HepG2 (cell line): ENCODE measurements at regions of chr7 and their contacts with region 1.

Region 1: GRCh38 chr7:65444899-65445823 is 71.5 kb downstream of the ZNF92 start:
- DNase-seq: peak; percentile 98
- ATAC-seq: peak; percentile 99
- H3K4me3 ChIP-seq: peak overlapping the region in 1 of 3 experiments; percentile 15; a peak in 1 of 6 replicates
- H3K27ac ChIP-seq: peak overlapping the region; percentile 97
- H3K4me1 ChIP-seq: peaks cover 83% of the 10 kb centered on the region
- H3K27me3 ChIP-seq: no peaks in the 10 kb centered on the region
- CTCF ChIP-seq: no peak
- EP300 ChIP-seq: peak; percentile 92 to 99
- POLR2A ChIP-seq: no peak
- RAD21 ChIP-seq: no peak

Region 2: GRCh38 chr7:65373608-65374351 is 71.4 kb before region 1 on chr7 and contains the start of gene ZNF92:
- CTCF ChIA-PET with region 1: no interaction called
- POLR2A ChIA-PET with region 1: interaction called, 4 read pairs
- in situ Hi-C with region 1: no loop called
- intact Hi-C with region 1: loop called (anchors 1 kb)
- DNase-seq: peak; percentile 97
- ATAC-seq: peak; percentile 98
- H3K4me3 ChIP-seq: peak within 1 kb of the TSS; percentile 80 to 97 (median 91)
- H3K27ac ChIP-seq: peak within 1 kb of the TSS; percentile 75
- H3K4me1 ChIP-seq: peaks cover 65% of the 10 kb centered on the region
- H3K27me3 ChIP-seq: no peaks in the 10 kb centered on the region
- CTCF ChIP-seq: 0 out of 2 replicates have a peak, but pooled peaks have one; percentile 3
- EP300 ChIP-seq: no peak
- POLR2A ChIP-seq: peak; percentile 94 to 97
- RAD21 ChIP-seq: peak; percentile 38
- total RNA-seq, gene ZNF92: 13.2 and 19.0 TPM in 2 replicates

Region 3: GRCh38 chr7:65397730-65398142 is 47.4 kb before region 1 on chr7:
- CTCF ChIA-PET with region 1: no interaction called
- POLR2A ChIA-PET with region 1: no interaction called
- in situ Hi-C with region 1: no loop called
- intact Hi-C with region 1: loop called (anchors 2 kb)
- DNase-seq: peak; percentile 86
- ATAC-seq: peak; percentile 100
- H3K4me3 ChIP-seq: no peak overlapping the region; a peak in 1 of 6 replicates
- H3K27ac ChIP-seq: peak overlapping the region; percentile 50
- H3K4me1 ChIP-seq: peaks cover 40% of the 10 kb centered on the region
- H3K27me3 ChIP-seq: no peaks in the 10 kb centered on the region
- CTCF ChIP-seq: peak; percentile 36; the same call in 1 of the 2 replicates
- EP300 ChIP-seq: peak in 1 of 2 experiments; percentile 71; a peak in 2 of 4 replicates
- POLR2A ChIP-seq: no peak
- RAD21 ChIP-seq: peak; percentile 48; the same call in 1 of the 2 replicates

Region 4: DNA sequence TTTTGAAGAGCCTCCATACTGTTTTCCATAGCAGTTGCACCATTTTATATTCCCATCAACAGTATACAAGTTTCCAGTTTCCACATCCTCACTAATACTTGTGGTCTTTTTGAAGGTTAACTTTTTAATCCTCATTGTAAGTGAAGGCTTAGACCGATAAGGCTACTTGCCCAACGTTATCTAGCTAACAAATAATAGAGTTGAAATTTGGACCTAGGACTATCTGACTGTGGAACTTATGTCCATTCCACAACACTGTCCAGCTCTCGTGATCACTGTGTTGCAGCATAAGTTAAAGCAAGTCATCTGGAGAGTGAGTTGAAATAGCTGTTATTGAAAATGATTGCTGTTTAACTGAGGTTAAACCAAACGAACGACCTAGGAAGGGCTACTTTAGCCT is 12.5 kb after region 1 on chr7:
- CTCF ChIA-PET with region 1: no interaction called
- POLR2A ChIA-PET with region 1: interaction called, 5 read pairs
- in situ Hi-C with region 1: no loop called
- intact Hi-C with region 1: loop called (anchors 1 kb)
- DNase-seq: peak; percentile 92
- ATAC-seq: peak; percentile 96
- H3K4me3 ChIP-seq: no peak overlapping the region
- H3K27ac ChIP-seq: peak overlapping the region; percentile 75
- H3K4me1 ChIP-seq: peaks cover 94% of the 10 kb centered on the region
- H3K27me3 ChIP-seq: no peaks in the 10 kb centered on the region
- CTCF ChIP-seq: no peak
- EP300 ChIP-seq: peak in 1 of 2 experiments; percentile 85; a peak in 2 of 4 replicates
- POLR2A ChIP-seq: no peak
- RAD21 ChIP-seq: no peak

Region 5: DNA sequence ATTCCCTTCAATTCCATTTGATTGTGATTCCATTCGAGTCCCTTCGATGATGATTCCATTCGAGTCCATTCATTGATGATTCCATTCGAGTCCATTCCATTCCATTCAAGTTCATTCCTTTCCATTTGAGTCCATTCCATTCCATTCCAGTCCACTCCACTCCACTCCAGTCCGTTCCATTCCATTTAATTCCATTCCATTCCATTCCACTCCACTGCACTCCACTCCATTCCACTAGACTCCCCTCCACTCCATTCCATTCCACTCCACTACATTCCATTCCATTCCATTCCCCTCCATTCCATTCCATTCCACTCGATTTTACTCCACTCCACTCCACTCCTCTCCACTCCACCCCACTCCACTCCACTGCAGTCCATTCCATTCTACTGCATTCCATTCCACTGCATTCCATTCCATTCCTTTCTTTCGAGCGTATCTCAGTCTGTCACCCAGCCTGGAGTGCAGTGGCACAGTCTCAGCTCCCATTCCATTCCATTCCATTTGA is 44.2 kb after region 1 on chr7:
- CTCF ChIA-PET with region 1: no interaction called
- POLR2A ChIA-PET with region 1: no interaction called
- in situ Hi-C with region 1: no loop called
- intact Hi-C with region 1: no loop called
- DNase-seq: no peak
- ATAC-seq: no peak
- H3K4me3 ChIP-seq: no peak overlapping the region
- H3K27ac ChIP-seq: no peak overlapping the region
- H3K4me1 ChIP-seq: no peaks in the 10 kb centered on the region
- H3K27me3 ChIP-seq: no peaks in the 10 kb centered on the region
- CTCF ChIP-seq: no peak
- EP300 ChIP-seq: no peak
- POLR2A ChIP-seq: no peak
- RAD21 ChIP-seq: no peak